WTC11 (cell line): ENCODE measurements at regions of chr5 and their contacts with region 1.

Region 1: GRCh38 chr5:141960449-141961202 is 2.6 kb upstream of the PCDH12 start:
- DNase-seq: peak; percentile 88
- ATAC-seq: peak; percentile 90
- H3K4me3 Mint-ChIP-seq: no peak overlapping the region
- H3K27ac Mint-ChIP-seq: 0 out of 2 replicates have a peak overlapping the region, but pooled peaks have one; percentile 24
- H3K4me1 Mint-ChIP-seq: peaks cover 38% of the 10 kb centered on the region
- H3K27me3 Mint-ChIP-seq: no peaks in the 10 kb centered on the region
- CTCF ChIP-seq: peak; percentile 91

Region 2: DNA sequence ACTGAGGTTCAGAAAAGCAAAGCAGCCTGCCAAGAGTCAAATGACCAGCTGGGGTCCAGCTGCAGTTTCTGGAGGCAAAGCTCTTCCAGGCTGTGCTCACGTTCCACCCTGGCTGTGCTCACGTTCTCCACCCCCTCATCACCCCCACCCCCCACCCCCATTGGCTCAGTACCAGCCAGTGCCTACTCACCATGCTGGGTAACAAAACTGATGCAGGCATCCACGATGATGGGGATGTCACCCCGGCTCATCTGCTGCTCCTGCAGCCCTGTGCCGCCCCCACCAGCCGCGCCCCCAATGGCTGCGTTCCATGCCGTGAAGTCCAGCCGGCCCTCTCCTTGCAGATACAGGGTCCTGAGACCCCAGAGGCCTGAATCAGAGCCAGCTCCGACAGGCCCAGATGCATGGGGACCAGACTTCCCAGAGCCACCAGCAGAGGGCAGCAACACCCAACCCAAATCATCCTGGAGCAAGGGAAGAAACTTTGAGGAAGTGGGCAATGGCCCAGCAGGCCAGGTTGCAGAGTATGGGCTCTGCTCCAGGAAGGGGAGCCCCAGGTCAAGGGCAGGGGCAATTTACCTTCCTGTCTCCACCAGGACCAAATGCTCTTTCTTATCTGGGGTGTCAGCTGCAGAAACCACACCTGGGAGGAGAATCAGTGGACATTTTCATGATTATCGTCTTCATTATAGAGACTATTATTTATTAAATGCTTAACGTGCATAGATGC is 295.7 kb before region 1 on chr5:
- CTCF ChIA-PET with region 1: interaction called, 29 read pairs
- POLR2A ChIA-PET with region 1: no interaction called
- DNase-seq: peak; percentile 88
- ATAC-seq: peak; percentile 95
- H3K4me3 Mint-ChIP-seq: no peak overlapping the region
- H3K27ac Mint-ChIP-seq: no peak overlapping the region
- H3K4me1 Mint-ChIP-seq: peaks cover 11% of the 10 kb centered on the region
- H3K27me3 Mint-ChIP-seq: no peaks in the 10 kb centered on the region
- CTCF ChIP-seq: peak; percentile 92

Region 3: GRCh38 chr5:141691867-141692532 is 268.6 kb before region 1 on chr5:
- CTCF ChIA-PET with region 1: interaction called, 136 read pairs
- POLR2A ChIA-PET with region 1: no interaction called
- DNase-seq: peak; percentile 93
- ATAC-seq: peak; percentile 72
- H3K4me3 Mint-ChIP-seq: peak overlapping the region; percentile 69
- H3K27ac Mint-ChIP-seq: no peak overlapping the region
- H3K4me1 Mint-ChIP-seq: peaks cover 30% of the 10 kb centered on the region
- H3K27me3 Mint-ChIP-seq: peaks cover 10% of the 10 kb centered on the region
- CTCF ChIP-seq: peak; percentile 99

Region 4: GRCh38 chr5:141778206-141778605 is 182.4 kb before region 1 on chr5:
- CTCF ChIA-PET with region 1: interaction called, 11 read pairs
- POLR2A ChIA-PET with region 1: no interaction called
- DNase-seq: no peak
- ATAC-seq: peak; percentile 45
- H3K4me3 Mint-ChIP-seq: no peak overlapping the region
- H3K27ac Mint-ChIP-seq: no peak overlapping the region
- H3K4me1 Mint-ChIP-seq: peaks cover 38% of the 10 kb centered on the region
- H3K27me3 Mint-ChIP-seq: no peaks in the 10 kb centered on the region
- CTCF ChIP-seq: no peak

Region 5: DNA sequence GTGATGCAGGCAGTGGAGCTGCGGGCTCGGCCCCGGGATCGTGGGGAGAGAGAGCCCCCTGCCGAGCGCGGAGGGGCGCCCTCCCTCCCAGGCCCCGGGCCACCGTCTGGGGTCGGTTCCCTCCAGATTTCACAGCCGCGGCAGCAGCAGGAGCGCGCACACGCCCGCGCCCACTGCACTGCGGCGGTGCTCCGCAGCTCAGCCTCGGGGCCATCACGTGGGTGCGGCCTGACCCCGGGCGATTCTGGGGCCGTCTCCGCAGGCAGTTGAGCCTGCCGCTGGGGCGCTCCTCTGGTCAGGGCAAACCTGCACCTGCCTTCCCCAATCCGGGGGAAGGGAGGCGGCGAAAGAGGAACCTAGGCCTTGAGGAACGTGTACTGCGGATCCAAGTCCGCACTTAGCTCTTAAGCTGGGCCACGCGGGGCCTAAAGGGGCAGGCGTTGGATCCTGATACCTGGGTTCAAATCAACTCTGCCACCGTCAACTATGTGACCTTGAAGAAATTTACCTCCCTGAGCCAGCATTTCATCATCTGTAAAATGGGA is 46.4 kb before region 1 on chr5:
- CTCF ChIA-PET with region 1: interaction called, 14 read pairs
- POLR2A ChIA-PET with region 1: no interaction called
- DNase-seq: peak; percentile 77
- ATAC-seq: peak; percentile 79
- H3K4me3 Mint-ChIP-seq: peak overlapping the region; percentile 66
- H3K27ac Mint-ChIP-seq: no peak overlapping the region
- H3K4me1 Mint-ChIP-seq: peaks cover 29% of the 10 kb centered on the region
- H3K27me3 Mint-ChIP-seq: peaks cover 27% of the 10 kb centered on the region
- CTCF ChIP-seq: no peak

Region 6: DNA sequence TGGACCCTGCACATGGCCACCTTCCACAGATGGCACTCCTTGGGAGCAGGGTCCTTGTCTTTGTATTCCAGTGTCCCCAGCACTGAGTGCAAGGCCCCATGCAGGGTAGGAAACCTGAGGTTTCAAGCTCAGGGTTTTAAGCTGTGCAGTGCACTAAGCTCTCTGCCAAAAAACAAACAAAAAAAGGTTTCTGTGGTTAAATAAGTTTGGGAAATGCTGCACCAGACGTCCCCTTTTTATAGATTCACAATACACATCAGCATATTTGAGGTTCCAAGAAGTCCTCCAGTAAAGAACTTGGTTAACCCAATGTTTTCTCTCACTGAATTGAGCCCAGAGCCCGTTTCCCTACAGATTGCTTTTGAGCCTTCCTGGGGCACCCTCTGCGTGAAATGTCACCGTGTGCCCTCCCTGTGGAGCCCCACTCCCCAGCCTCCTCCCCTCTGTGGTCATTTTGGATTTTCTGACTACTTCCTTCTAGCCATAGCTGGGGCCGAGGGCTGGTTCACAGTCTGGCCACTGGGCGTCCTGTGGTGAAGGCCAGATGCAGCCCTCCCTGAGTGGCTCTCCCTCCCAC is 19.8 kb before region 1 on chr5:
- CTCF ChIA-PET with region 1: interaction called, 24 read pairs
- POLR2A ChIA-PET with region 1: interaction called, 4 read pairs
- DNase-seq: no peak
- ATAC-seq: peak; percentile 24
- H3K4me3 Mint-ChIP-seq: no peak overlapping the region
- H3K27ac Mint-ChIP-seq: peak overlapping the region; percentile 81
- H3K4me1 Mint-ChIP-seq: peaks cover 11% of the 10 kb centered on the region
- H3K27me3 Mint-ChIP-seq: no peaks in the 10 kb centered on the region; the same call in 1 of the 2 replicates
- CTCF ChIP-seq: no peak